ENCODE measurements at regions of chr3 and their contacts with region 1.

Region 1: GRCh38 chr3:53989451-53990345 is 98.0 kb upstream of the SELENOK start:
- DNase-seq: no peak

Region 2: GRCh38 chr3:51982782-51983577 is 2006.7 kb before region 1 on chr3 and contains the start of gene ACY1:
- intact Hi-C with region 1: no loop called
- DNase-seq: peak; percentile 97
- total RNA-seq, gene ACY1: 11.8 to 12.3 TPM

Region 3: DNA sequence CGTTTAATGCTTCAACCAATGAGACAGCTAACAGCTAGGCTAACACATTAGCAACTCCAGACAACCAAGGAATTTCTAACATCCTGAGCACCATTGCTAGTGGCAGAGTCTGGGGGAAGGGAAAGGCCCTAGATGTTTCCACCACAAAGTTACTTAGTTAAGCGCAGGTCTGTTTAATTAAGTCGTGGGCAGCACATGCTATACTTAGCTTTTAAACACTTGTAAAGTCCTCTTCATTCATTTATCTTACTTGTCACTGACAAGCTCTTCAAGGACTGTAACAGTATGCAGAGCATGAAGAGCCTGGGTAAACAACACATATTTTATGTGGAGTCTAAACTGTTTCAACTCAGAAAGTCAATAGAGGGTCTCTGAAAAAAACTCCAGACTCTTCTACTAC is 1718.5 kb after region 1 on chr3:
- intact Hi-C with region 1: loop called in 1 of 2 experiments (anchors 5 kb)
- DNase-seq: no peak

Measured in posterior vena cava (tissue), 2 donors.